ENCODE measurements at regions of chr1 and their contacts with region 1.

Region 1: GRCh38 chr1:24502709-24503058 is at the start of gene RCAN3:
- DNase-seq: peak; percentile 92
- H3K4me3 Mint-ChIP-seq: peak within 1 kb of the TSS; percentile 99
- H3K27ac Mint-ChIP-seq: peak within 1 kb of the TSS; percentile 99
- H3K4me1 Mint-ChIP-seq: peaks cover 71% of the 10 kb centered on the region
- H3K27me3 Mint-ChIP-seq: no peaks in the 10 kb centered on the region
- total RNA-seq, gene RCAN3: 59.3 to 62.6 TPM

Region 2: DNA sequence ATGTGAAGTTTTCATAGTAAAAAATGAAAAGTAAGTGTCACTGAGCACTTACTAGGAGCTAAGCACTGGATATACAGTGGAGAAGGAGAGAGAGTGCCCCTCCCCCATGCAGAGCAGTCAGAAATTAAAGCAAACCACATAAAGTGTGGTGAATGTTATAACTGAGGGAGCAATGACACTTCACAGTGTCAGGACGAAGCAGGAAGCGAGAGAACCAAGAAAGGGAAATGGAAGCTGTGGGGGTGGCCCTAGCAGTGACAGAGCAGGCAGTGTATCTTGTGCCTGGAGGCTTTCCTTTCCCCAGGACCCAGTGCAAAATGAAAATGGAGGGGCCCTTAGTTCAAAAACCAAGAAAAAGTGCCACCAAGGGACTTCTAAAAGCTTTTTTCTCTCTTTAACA is 21.6 kb before region 1 on chr1:
- CTCF ChIA-PET with region 1: interaction called, 34 read pairs
- POLR2A ChIA-PET with region 1: interaction called, 232 read pairs
- DNase-seq: peak; percentile 65
- H3K4me3 Mint-ChIP-seq: peak overlapping the region; percentile 27
- H3K27ac Mint-ChIP-seq: peak overlapping the region; percentile 99
- H3K4me1 Mint-ChIP-seq: peaks cover 50% of the 10 kb centered on the region
- H3K27me3 Mint-ChIP-seq: no peaks in the 10 kb centered on the region

Region 3: DNA sequence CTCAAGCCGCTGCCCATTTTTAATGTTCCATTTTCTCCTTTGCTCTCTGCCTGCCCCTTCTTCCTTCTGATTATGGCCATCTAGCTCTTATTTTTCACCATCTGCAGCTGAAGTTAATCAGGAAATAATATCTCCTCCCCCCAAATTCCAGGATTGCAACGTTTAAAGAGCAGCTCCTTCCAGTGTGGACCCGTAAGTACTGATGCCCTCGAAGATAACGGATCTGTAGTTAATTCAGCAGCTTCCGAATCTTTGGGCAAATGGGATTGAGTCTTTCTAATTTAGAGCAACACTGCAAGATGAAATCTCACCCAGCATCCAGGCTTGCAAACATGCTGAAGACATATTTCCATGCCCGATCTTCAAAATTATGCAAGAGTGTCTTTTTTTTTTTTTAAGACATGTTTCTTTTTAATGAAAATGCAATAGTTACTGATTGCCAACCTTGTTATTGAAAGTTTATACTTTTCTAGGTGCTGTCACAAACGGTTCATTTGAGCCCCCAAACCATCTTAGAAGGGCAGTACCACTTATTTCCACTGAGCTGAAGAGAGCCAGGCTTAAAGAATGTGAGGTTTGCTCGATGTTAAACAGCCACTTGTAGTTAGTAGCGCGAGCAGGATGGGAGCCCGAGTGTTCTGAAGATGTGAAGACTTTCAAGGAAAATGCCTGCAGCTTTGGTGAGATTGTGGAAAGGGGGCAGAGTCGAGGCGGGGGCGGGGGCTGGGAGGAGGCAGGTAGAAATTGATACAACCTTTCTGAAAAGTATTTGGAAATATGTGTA is 10.9 kb before region 1 on chr1:
- CTCF ChIA-PET with region 1: interaction called, 34 read pairs
- POLR2A ChIA-PET with region 1: interaction called, 165 read pairs
- DNase-seq: no peak
- H3K4me3 Mint-ChIP-seq: no peak overlapping the region
- H3K27ac Mint-ChIP-seq: no peak overlapping the region
- H3K4me1 Mint-ChIP-seq: peaks cover 16% of the 10 kb centered on the region
- H3K27me3 Mint-ChIP-seq: peaks cover 3% of the 10 kb centered on the region

Region 4: GRCh38 chr1:24536391-24536840 is 33.7 kb after region 1 on chr1:
- CTCF ChIA-PET with region 1: interaction called, 14 read pairs
- POLR2A ChIA-PET with region 1: interaction called, 100 read pairs
- DNase-seq: peak; percentile 75
- H3K4me3 Mint-ChIP-seq: peak overlapping the region; percentile 73
- H3K27ac Mint-ChIP-seq: peak overlapping the region; percentile 98
- H3K4me1 Mint-ChIP-seq: peaks cover 74% of the 10 kb centered on the region
- H3K27me3 Mint-ChIP-seq: no peaks in the 10 kb centered on the region

Region 5: DNA sequence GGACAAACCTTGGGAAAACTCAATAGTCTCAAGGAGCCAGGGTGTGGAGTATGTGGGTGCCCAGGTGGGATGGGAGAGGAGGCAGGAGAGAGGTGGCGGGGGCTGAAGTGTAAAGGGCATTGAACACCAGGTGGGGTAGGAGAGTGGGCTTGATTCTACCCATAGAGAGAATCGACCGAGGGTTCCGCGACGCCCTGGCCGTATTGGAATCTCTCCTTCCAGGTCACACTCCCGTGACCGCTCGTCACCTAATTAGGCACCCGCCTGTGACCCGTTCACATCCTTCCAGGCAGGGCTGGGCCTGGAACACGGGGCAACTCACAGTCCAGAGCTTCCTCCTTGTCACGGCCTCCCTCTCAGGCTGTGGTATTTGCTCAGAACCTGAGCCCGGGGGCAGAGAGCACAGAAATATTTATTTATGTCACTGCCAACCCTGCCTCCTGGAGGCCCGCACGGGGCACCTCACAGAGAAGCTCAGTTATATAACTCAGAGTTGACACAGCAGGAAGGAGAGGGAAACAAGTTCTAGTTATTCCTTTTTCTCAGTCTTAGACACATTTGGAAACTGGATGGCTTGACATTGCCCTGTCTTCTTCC is 65.2 kb after region 1 on chr1:
- CTCF ChIA-PET with region 1: no interaction called
- POLR2A ChIA-PET with region 1: no interaction called
- DNase-seq: no peak
- H3K4me3 Mint-ChIP-seq: no peak overlapping the region
- H3K27ac Mint-ChIP-seq: no peak overlapping the region
- H3K4me1 Mint-ChIP-seq: peaks cover 4% of the 10 kb centered on the region
- H3K27me3 Mint-ChIP-seq: peaks cover 2% of the 10 kb centered on the region

Region 6: GRCh38 chr1:24586970-24587820 is 84.5 kb after region 1 on chr1:
- CTCF ChIA-PET with region 1: interaction called, 11 read pairs
- POLR2A ChIA-PET with region 1: interaction called, 6 read pairs
- DNase-seq: peak; percentile 54
- H3K4me3 Mint-ChIP-seq: no peak overlapping the region
- H3K27ac Mint-ChIP-seq: no peak overlapping the region
- H3K4me1 Mint-ChIP-seq: peaks cover 8% of the 10 kb centered on the region
- H3K27me3 Mint-ChIP-seq: peaks cover 8% of the 10 kb centered on the region